CD8-positive, alpha-beta T cell (primary cell): ENCODE measurements at regions of chr1 and their contacts with region 1.

Region 1: DNA sequence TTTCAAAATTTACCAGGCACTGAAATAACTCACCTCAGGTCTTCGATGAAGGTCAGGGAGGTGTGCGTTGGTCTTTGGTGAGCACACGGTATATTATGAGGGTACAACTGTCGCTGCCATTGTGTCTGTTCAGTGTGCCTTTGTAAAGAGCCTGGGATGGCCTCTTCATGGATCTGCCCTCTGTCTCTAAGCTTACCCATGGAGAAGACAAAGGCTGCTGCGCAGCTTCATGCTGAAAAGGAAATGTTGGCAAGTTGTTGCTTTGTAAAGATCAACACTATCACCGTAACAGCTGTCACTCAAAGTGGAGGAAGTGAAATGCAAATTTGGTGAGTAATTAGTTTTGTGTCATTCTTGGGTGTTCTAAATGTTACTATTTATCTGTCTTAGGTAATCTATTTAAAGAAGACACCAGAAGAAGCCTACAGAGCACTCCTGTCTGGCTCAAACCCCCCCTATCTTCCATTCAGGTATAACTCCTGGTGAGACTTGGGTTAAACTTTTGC is 71.6 kb downstream of the CDC14A start:
- DNase-seq: peak in 5 of 9 experiments; percentile 13 to 47 (median 31)
- ATAC-seq: peak; percentile 75
- H3K4me3 ChIP-seq: peak overlapping the region in 1 of 2 experiments; percentile 33
- H3K4me3 Mint-ChIP-seq: peak overlapping the region; percentile 75
- H3K27ac ChIP-seq: peak overlapping the region; percentile 2 to 44
- H3K27ac Mint-ChIP-seq: peak overlapping the region; percentile 89
- H3K4me1 ChIP-seq: peaks cover 31% of the 10 kb centered on the region
- H3K4me1 Mint-ChIP-seq: peaks cover 74% of the 10 kb centered on the region
- H3K27me3 ChIP-seq: no peaks in the 10 kb centered on the region
- H3K27me3 Mint-ChIP-seq: no peaks in the 10 kb centered on the region
- CTCF ChIP-seq: no peak

Region 2: GRCh38 chr1:100387209-100387608 is 36.7 kb before region 1 on chr1:
- CTCF ChIA-PET with region 1: interaction called, 8 read pairs
- POLR2A ChIA-PET with region 1: no interaction called
- intact Hi-C with region 1: loop called in 1 of 2 experiments (anchors 5 kb)
- DNase-seq: peak in 1 of 9 experiments; percentile 43
- ATAC-seq: no peak
- H3K4me3 ChIP-seq: peak overlapping the region; percentile 3 to 6
- H3K4me3 Mint-ChIP-seq: peak overlapping the region; percentile 76
- H3K27ac ChIP-seq: peak overlapping the region; percentile 22 to 65
- H3K27ac Mint-ChIP-seq: peak overlapping the region; percentile 88
- H3K4me1 ChIP-seq: peaks cover 61% of the 10 kb centered on the region
- H3K4me1 Mint-ChIP-seq: peaks cover 88% of the 10 kb centered on the region
- H3K27me3 ChIP-seq: no peaks in the 10 kb centered on the region
- H3K27me3 Mint-ChIP-seq: no peaks in the 10 kb centered on the region
- CTCF ChIP-seq: no peak

Region 3: GRCh38 chr1:100443811-100444571 is 20.1 kb after region 1 on chr1:
- CTCF ChIA-PET with region 1: interaction called, 4 read pairs
- POLR2A ChIA-PET with region 1: interaction called, 12 read pairs
- intact Hi-C with region 1: loop called in 1 of 2 experiments (anchors 2 kb)
- DNase-seq: peak in 5 of 9 experiments; percentile 18 to 75 (median 39)
- ATAC-seq: peak; percentile 35
- H3K4me3 ChIP-seq: peak overlapping the region in 1 of 2 experiments; percentile 25
- H3K4me3 Mint-ChIP-seq: peak overlapping the region; percentile 71
- H3K27ac ChIP-seq: peak overlapping the region; percentile 73 to 88
- H3K27ac Mint-ChIP-seq: peak overlapping the region; percentile 97
- H3K4me1 ChIP-seq: peaks cover 71% of the 10 kb centered on the region
- H3K4me1 Mint-ChIP-seq: peaks cover 84% of the 10 kb centered on the region
- H3K27me3 ChIP-seq: no peaks in the 10 kb centered on the region
- H3K27me3 Mint-ChIP-seq: no peaks in the 10 kb centered on the region
- CTCF ChIP-seq: no peak